ENCODE measurements at regions of chr13 and their contacts with region 1.

Region 1: DNA sequence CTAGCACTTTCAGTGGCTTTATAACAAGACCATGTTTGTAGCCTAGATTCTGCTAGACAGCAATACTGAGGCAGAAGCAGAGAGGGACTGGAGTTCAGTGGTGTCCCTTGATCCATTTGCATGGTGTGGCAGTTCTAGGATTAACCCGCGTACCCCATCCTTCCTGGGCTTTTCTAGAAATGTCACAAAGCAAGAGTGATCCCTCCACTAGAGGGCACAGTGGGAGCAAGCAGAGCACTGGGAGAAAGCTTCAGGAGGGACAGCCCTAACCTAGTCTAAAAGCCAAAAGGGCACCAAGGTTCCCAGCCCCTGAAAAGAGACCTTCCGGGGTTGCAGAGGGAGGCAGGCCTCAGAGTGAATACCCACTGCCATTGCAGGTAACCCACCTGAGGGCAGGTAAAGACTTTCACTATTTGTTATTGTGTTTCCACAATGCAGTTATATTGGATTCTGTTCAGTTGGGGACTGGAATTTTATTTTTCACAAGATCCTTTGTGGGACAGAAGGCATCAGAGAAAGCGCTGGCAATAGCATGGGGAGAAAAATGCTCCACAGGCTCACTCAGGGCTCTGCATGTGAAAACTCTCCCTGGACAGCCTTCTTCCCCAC is 170.6 kb downstream of the FLT1 start:
- DNase-seq: peak in 1 of 2 donors; percentile 81
- ATAC-seq: peak; percentile 75 to 91 (median 79)
- H3K4me3 ChIP-seq: no peak overlapping the region
- H3K27ac ChIP-seq: peak overlapping the region in 8 of 10 donors; percentile 23 to 80 (median 54)
- H3K4me1 ChIP-seq: peaks cover under 1 to 66% (median 18%) of the 10 kb centered on the region in 9 donors
- H3K27me3 ChIP-seq: peaks cover 0 to 6% (median 0%) of the 10 kb centered on the region in 7 donors
- CTCF ChIP-seq: peak; percentile 64 to 89 (median 82)

Region 2: GRCh38 chr13:28258417-28258816 is 65.9 kb before region 1 on chr13:
- intact Hi-C with region 1: no loop called
- DNase-seq: no peak
- ATAC-seq: no peak
- H3K4me3 ChIP-seq: no peak overlapping the region
- H3K27ac ChIP-seq: no peak overlapping the region
- H3K4me1 ChIP-seq: peaks cover 0 to 6% (median 0%) of the 10 kb centered on the region in 9 donors
- H3K27me3 ChIP-seq: no peaks in the 10 kb centered on the region
- CTCF ChIP-seq: no peak

Region 3: GRCh38 chr13:28394422-28394821 is 70.1 kb after region 1 on chr13:
- intact Hi-C with region 1: loop called in 2 of 10 experiments (anchors 5 to 10 kb)
- DNase-seq: no peak
- ATAC-seq: peak in 5 of 8 donors; percentile 25 to 75 (median 39)
- H3K4me3 ChIP-seq: no peak overlapping the region
- H3K27ac ChIP-seq: peak overlapping the region in 6 of 10 donors; percentile 32 to 74 (median 49)
- H3K4me1 ChIP-seq: peaks cover 0 to 90% (median 32%) of the 10 kb centered on the region in 9 donors
- H3K27me3 ChIP-seq: peaks cover 0 to 3% (median 0%) of the 10 kb centered on the region in 7 donors
- CTCF ChIP-seq: no peak

Region 4: DNA sequence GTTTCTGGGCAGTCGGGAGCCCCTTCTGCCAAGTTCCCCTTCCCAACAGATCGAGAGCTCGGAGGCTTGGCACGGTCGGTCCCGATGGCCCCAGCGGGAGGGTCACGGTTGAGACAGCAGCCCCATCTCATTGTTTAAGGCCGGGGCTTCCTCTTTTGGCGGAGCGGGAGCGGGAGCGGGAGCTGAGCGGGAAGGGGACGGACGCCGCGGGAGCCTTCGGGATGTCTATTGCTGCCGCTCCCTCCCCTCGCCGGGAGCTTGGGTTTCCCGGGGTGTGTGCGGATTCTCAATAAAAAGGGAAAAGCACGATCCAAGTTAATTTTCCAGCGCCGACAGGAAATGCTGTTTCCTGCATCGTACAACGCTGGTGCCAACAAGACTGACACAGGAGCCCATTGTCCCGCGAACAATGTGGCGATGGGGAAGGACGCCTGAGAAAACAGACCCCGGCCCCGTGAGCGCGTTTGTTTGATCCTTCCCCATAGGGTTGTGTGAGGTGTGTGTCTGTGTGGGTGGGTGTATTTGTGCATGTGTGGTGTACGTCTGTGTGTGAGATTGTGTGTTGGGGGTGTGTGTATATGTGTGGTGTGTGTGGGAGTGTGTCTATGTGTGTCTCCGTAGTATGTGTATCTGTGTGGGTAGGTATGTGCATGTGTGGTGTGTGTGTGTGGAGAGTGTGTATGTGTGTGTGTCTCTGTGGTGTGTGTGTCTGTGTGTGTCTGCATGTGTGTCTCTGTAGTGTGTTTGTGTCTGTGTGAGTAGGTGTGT is 207.0 kb after region 1 on chr13:
- intact Hi-C with region 1: loop called in 1 of 10 experiments (anchors 5 kb)
- DNase-seq: peak; percentile 72 to 80
- ATAC-seq: peak; percentile 56 to 83 (median 72)
- H3K4me3 ChIP-seq: peak overlapping the region in 9 of 10 donors; percentile 43 to 65 (median 54)
- H3K27ac ChIP-seq: peak overlapping the region; percentile 53 to 91 (median 86)
- H3K4me1 ChIP-seq: peaks cover 0 to 43% (median 15%) of the 10 kb centered on the region in 9 donors
- H3K27me3 ChIP-seq: peaks cover 0 to 67% (median 20%) of the 10 kb centered on the region in 7 donors
- CTCF ChIP-seq: no peak

Region 5: GRCh38 chr13:28658796-28659620 is 334.7 kb after region 1 on chr13 and contains the start of gene POMP:
- intact Hi-C with region 1: loop called in 1 of 10 experiments (anchors 5 kb)
- DNase-seq: peak; percentile 96
- ATAC-seq: peak; percentile 96 to 99 (median 98)
- H3K4me3 ChIP-seq: peak within 1 kb of the TSS; percentile 74 to 95 (median 89)
- H3K27ac ChIP-seq: peak within 1 kb of the TSS; percentile 83 to 99 (median 98)
- H3K4me1 ChIP-seq: peaks cover 11 to 72% (median 51%) of the 10 kb centered on the region in 9 donors
- H3K27me3 ChIP-seq: no peaks in the 10 kb centered on the region
- CTCF ChIP-seq: no peak
- total RNA-seq, gene POMP: 91.7 to 120 (median 101) TPM

Region 6: GRCh38 chr13:28792992-28793391 is 468.7 kb after region 1 on chr13:
- intact Hi-C with region 1: loop called in 6 of 10 experiments (anchors 5 to 10 kb)
- DNase-seq: no peak
- ATAC-seq: peak in 2 of 8 donors; percentile 43 to 62
- H3K4me3 ChIP-seq: no peak overlapping the region
- H3K27ac ChIP-seq: no peak overlapping the region
- H3K4me1 ChIP-seq: peaks cover 0 to 8% (median 0%) of the 10 kb centered on the region in 9 donors
- H3K27me3 ChIP-seq: peaks cover 0 to 50% (median 13%) of the 10 kb centered on the region in 7 donors
- CTCF ChIP-seq: no peak

Region 7: DNA sequence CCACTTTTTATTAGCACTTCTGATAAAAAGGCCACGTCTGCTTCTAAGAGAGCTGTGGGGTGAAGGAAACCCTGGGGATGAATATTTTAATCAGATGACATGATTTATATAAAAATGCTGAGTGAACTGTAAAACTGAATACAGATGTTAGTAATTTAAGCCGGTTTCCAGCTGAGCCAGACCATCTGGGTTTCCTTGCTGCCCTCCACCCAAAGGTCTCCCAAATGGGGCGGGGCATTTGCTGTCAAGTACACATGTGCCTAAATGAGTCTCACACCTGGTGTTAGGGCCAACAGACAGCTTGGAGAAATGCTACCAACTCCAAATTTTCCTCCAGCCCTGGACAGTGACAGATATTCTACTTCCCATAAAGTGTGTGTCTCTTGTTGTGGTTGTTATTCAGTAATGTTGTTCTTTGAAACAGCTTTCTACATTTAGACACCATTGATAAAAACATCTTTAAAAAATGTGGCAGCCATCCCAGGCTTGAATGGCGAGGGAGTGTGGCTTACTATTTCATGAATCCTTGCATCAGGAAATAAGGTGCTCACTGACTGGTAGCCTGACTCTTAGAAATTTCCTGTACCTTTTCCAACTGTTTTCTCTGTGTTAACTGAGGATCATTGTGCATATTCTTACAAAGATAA is 846.3 kb after region 1 on chr13:
- intact Hi-C with region 1: no loop called
- DNase-seq: no peak
- ATAC-seq: peak in 4 of 8 donors; percentile 35 to 78 (median 65)
- H3K4me3 ChIP-seq: no peak overlapping the region
- H3K27ac ChIP-seq: peak overlapping the region in 1 of 10 donors; percentile 25
- H3K4me1 ChIP-seq: peaks cover 0 to 14% (median 4%) of the 10 kb centered on the region in 9 donors
- H3K27me3 ChIP-seq: no peaks in the 10 kb centered on the region
- CTCF ChIP-seq: no peak

Measured in heart right ventricle (tissue), 16 donors.